Prostate gland (tissue), 2 donors: ENCODE measurements at regions of chr6 and their contacts with region 1.

Region 1: DNA sequence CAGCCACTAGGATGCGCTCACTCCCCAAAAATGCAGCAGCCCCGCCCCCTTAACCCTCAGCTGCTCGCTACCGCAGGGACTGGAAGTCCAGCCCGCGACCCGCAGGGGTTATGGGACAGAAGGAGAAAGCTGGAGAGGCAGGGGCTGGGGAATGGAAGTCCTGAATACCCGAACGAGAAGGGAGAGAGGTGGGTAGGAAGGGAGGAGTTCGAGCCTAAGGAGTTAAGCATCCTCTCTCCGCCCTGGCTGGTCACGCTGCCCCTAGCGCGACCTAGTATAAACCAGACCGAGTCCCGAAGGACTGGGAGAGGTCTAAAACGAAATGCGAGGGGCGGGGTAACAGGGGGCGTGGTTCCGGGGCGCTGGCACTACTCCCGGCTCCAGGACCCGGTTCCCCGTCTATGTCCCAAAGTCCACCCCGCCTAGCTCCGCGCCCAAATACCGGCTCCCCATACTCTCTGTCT is 448 bp upstream of the DDAH2 start:
- DNase-seq: peak; percentile 88
- H3K4me3 ChIP-seq: peak overlapping the region; percentile 83 to 88
- H3K27ac ChIP-seq: peak overlapping the region; percentile 98 to 99
- H3K4me1 ChIP-seq: peaks cover 10% of the 10 kb centered on the region
- H3K27me3 ChIP-seq: no peaks in the 10 kb centered on the region
- CTCF ChIP-seq: peak in 3 of 4 experiments; percentile 68 to 82 (median 77)
- POLR2A ChIP-seq: peak; percentile 70

Region 2: GRCh38 chr6:31702819-31703522 is 26.6 kb before region 1 on chr6 and contains the start of gene ABHD16A:
- intact Hi-C with region 1: loop called (anchors 2 kb)
- DNase-seq: peak; percentile 99
- H3K4me3 ChIP-seq: peak within 1 kb of the TSS; percentile 70 to 72
- H3K27ac ChIP-seq: peak within 1 kb of the TSS; percentile 97 to 98
- H3K4me1 ChIP-seq: peaks cover 3% of the 10 kb centered on the region
- H3K27me3 ChIP-seq: no peaks in the 10 kb centered on the region
- CTCF ChIP-seq: peak in 2 of 4 experiments; percentile 40 to 67
- POLR2A ChIP-seq: peak; percentile 99
- total RNA-seq, gene ABHD16A: 78.1 to 83.6 TPM